Activated naive CD4-positive, alpha-beta T cell treated with anti-CD3 and anti-CD28 coated beads for 36 hours (primary cell): ENCODE measurements at regions of chr20 and their contacts with region 1.

Region 1: GRCh38 chr20:49610701-49611538 is 43.0 kb upstream of the PTGIS start:
- DNase-seq: peak; percentile 83
- H3K4me3 Mint-ChIP-seq: peak overlapping the region; percentile 29
- H3K27ac Mint-ChIP-seq: no peak overlapping the region
- H3K4me1 Mint-ChIP-seq: peaks cover 12% of the 10 kb centered on the region
- H3K27me3 Mint-ChIP-seq: peaks cover 10% of the 10 kb centered on the region

Region 2: DNA sequence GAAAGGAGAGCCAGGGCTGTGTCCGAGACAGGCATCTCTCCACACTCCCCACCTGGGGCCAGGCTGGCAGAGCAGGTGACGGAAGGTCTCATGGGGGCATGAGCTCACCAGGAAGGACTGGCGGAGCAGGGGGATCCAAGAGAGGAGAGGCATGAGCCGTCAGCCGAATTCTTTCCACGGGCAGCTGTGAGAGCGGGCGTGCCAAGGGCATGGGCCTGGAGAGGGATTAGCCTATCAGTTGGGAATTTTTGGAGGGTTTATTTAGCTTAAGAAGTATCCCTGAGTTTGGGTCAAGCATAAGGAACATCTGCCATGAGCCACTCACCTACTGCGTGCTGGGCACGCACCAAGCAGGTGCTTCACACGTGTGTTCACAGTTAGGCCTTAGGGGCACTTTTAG is 272.9 kb before region 1 on chr20:
- CTCF ChIA-PET with region 1: interaction called, 7 read pairs
- intact Hi-C with region 1: loop called (anchors 1 kb)
- DNase-seq: no peak
- H3K4me3 Mint-ChIP-seq: no peak overlapping the region
- H3K27ac Mint-ChIP-seq: no peak overlapping the region
- H3K4me1 Mint-ChIP-seq: no peaks in the 10 kb centered on the region
- H3K27me3 Mint-ChIP-seq: peaks cover 5% of the 10 kb centered on the region

Region 3: DNA sequence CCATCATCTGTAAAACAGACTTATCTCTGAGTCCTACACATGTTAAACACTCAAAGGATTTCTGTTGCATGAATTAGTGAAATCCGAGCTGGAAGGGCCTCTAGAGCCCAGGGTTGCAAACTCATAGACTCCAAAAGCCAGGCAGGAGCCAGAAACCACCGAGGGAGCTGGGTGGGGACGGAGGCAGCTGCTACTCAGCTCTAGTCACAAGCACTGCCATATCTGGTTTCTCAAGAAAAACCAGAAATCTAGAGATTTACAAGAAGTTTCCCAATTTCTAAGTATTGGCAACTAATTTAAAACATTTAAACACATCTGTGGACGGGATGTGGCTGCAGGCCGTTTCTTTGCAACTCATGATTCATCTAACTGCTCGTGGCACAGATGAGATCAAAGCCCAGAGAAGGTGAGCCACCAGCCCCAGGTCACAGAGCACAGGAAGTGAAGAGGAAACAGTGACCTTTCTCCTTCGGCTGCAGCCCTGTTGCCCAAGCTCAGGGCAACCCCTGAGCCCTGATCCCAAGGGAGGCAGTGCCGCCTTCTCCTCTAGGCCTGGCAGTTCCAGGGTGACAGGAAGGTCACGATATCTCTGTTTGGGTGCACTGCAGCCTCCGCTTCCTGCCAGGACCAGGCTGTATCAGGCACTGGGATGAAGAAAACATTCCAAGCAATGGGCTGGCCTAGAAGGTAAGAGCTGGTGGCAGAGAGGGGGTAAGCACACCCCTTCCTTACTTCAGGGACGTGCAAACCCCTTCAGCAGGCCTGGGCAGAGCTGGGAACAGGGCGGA is 16.6 kb before region 1 on chr20:
- CTCF ChIA-PET with region 1: interaction called, 20 read pairs
- intact Hi-C with region 1: no loop called
- DNase-seq: peak; percentile 72
- H3K4me3 Mint-ChIP-seq: peak overlapping the region; percentile 10
- H3K27ac Mint-ChIP-seq: peak overlapping the region; percentile 65
- H3K4me1 Mint-ChIP-seq: peaks cover 42% of the 10 kb centered on the region
- H3K27me3 Mint-ChIP-seq: no peaks in the 10 kb centered on the region

Region 4: GRCh38 chr20:49797344-49797615 is 186.4 kb after region 1 on chr20:
- CTCF ChIA-PET with region 1: interaction called, 3 read pairs
- intact Hi-C with region 1: loop called (anchors 1 kb)
- DNase-seq: no peak
- H3K4me3 Mint-ChIP-seq: no peak overlapping the region
- H3K27ac Mint-ChIP-seq: no peak overlapping the region
- H3K4me1 Mint-ChIP-seq: peaks cover 16% of the 10 kb centered on the region
- H3K27me3 Mint-ChIP-seq: peaks cover 8% of the 10 kb centered on the region

Region 5: DNA sequence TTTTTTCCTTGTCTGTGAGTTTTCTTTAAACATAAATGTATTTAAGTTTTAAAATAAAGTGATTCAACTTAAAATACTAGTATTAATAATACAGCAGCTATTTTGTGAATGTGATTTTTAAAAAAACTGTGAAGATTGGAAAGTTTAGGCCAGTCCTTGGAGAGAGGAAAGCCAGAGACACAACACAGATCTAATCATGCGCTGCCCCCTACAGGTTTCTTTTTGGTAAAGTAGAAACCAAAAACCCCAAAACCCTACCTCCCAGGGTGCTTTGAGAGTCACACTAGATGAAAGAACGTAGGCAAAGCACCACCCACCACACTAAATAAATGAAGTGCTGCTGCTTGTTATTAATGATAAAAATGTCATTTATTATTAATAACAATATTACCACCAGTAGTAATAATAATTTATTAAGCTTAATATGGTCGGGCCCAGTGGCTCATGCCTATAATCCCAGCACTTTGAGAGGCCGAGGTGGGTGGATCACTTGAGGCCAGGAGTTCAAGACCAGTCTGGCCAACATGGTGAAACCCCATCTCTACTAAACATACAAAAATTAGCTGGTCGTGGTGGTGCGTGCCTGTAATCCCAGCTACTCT is 235.4 kb after region 1 on chr20:
- CTCF ChIA-PET with region 1: interaction called, 126 read pairs
- intact Hi-C with region 1: loop called (anchors 1 kb)
- DNase-seq: peak; percentile 72
- H3K4me3 Mint-ChIP-seq: no peak overlapping the region
- H3K27ac Mint-ChIP-seq: no peak overlapping the region
- H3K4me1 Mint-ChIP-seq: peaks cover 3% of the 10 kb centered on the region
- H3K27me3 Mint-ChIP-seq: no peaks in the 10 kb centered on the region

Region 6: DNA sequence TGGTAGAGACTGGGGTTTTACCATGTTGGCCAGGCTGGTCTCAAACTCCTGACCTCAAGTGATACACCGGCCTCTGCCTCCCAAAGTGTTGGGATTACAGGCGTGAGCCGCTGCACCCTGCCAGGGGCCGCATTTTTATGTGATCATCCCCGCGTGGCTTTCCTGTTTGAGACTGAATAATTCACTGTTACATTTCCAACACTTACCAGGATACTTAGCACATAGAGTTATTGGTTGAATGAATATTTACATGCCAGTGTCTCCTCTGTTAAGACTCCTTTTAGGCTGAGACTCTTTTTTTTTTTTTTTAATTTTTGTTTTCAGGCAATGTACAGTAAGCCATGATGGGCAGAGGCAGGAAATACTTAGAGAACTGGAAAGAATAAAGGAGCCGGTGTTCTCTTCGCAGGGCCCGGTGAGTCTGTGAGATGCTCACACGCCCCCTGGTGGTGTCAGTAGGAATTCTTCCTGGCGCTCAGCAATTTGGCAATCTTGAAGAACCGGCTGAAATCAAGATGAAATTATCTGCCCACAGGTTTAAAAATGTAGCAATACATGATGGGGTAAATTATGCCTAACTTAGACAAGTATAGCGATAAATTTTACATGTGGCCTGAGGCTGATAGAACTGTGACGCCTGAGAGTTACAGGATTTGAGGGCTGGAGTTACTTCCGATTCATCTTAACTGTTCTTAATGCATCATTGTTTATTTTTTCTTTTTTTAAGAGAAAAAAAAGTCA is 317.7 kb after region 1 on chr20:
- CTCF ChIA-PET with region 1: interaction called, 5 read pairs
- intact Hi-C with region 1: loop called (anchors 1 kb)
- DNase-seq: peak; percentile 90
- H3K4me3 Mint-ChIP-seq: no peak overlapping the region
- H3K27ac Mint-ChIP-seq: no peak overlapping the region
- H3K4me1 Mint-ChIP-seq: peaks cover 5% of the 10 kb centered on the region
- H3K27me3 Mint-ChIP-seq: no peaks in the 10 kb centered on the region